Naive thymus-derived CD4-positive, alpha-beta T cell (primary cell): ENCODE measurements at regions of chr3 and their contacts with region 1.

Region 1: GRCh38 chr3:108780235-108780634 is 23.0 kb upstream of the RETNLB start:
- DNase-seq: peak in 8 of 9 donors; percentile 9 to 64 (median 45)
- ATAC-seq: peak; percentile 73
- H3K4me3 ChIP-seq: no peak overlapping the region
- H3K4me3 Mint-ChIP-seq: peak overlapping the region in 8 of 10 donors; percentile 22 to 60 (median 50)
- H3K27ac ChIP-seq: no peak overlapping the region
- H3K27ac Mint-ChIP-seq: peak overlapping the region; percentile 2 to 81 (median 68)
- H3K4me1 ChIP-seq: peaks cover 14 to 34% of the 10 kb centered on the region in 2 donors
- H3K4me1 Mint-ChIP-seq: peaks cover 17 to 60% (median 39%) of the 10 kb centered on the region in 7 donors
- H3K27me3 ChIP-seq: no peaks in the 10 kb centered on the region
- H3K27me3 Mint-ChIP-seq: peaks cover 0 to 7% (median 0%) of the 10 kb centered on the region in 5 donors

Region 2: DNA sequence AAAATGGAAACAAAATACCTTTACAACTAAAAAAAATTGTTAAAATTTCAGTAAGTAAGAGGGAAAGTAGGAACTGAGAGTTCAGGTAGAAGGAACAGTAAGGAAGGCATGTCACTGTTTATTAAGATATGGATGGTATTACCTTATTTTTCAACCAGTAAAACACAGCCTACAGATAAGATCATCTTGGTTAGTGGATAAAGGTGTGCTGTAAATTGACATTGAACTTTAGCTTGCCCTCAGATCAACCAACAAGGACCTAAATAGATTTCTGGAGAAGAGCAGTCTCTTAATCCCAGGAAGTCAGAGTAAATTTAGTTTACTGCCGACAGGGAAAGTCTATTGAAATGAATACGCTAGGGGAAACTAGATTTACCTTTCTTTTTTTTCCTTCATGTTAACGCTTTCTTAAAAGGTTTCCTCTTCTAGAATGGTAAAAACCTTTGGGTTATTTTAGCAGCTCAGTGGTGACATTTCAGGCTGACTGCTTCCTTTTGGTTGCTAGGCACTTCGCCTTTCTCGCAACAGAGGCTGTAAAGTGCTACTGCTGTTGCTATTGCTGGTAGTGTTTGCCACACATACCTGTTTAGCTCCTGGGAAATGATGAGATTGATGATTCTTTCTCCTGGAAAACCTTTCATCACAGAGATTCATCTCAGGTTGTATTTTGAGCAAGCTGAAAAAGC is 177.8 kb before region 1 on chr3:
- CTCF ChIA-PET with region 1: no interaction called
- POLR2A ChIA-PET with region 1: no interaction called
- intact Hi-C with region 1: no loop called
- DNase-seq: peak in 7 of 9 donors; percentile 34 to 74 (median 57)
- ATAC-seq: peak; percentile 92
- H3K4me3 ChIP-seq: peak overlapping the region; percentile 22
- H3K4me3 Mint-ChIP-seq: peak overlapping the region; percentile 25 to 81 (median 74)
- H3K27ac ChIP-seq: peak overlapping the region; percentile 69
- H3K27ac Mint-ChIP-seq: peak overlapping the region; percentile 76 to 97 (median 93)
- H3K4me1 ChIP-seq: peaks cover 38 to 46% of the 10 kb centered on the region in 2 donors
- H3K4me1 Mint-ChIP-seq: peaks cover 27 to 64% (median 54%) of the 10 kb centered on the region in 7 donors
- H3K27me3 ChIP-seq: no peaks in the 10 kb centered on the region
- H3K27me3 Mint-ChIP-seq: no peaks in the 10 kb centered on the region

Region 3: GRCh38 chr3:108767253-108767652 is 13.0 kb before region 1 on chr3:
- CTCF ChIA-PET with region 1: no interaction called
- POLR2A ChIA-PET with region 1: no interaction called
- intact Hi-C with region 1: loop called in 1 of 2 experiments (anchors 2 kb)
- DNase-seq: no peak
- ATAC-seq: peak; percentile 12
- H3K4me3 ChIP-seq: no peak overlapping the region
- H3K4me3 Mint-ChIP-seq: peak overlapping the region in 3 of 10 donors; percentile 3 to 68 (median 28)
- H3K27ac ChIP-seq: no peak overlapping the region
- H3K27ac Mint-ChIP-seq: no peak overlapping the region
- H3K4me1 ChIP-seq: no peaks in the 10 kb centered on the region
- H3K4me1 Mint-ChIP-seq: peaks cover 0 to 5% (median 4%) of the 10 kb centered on the region in 7 donors
- H3K27me3 ChIP-seq: no peaks in the 10 kb centered on the region
- H3K27me3 Mint-ChIP-seq: peaks cover 0 to 12% (median 4%) of the 10 kb centered on the region in 5 donors